Naive thymus-derived CD4-positive, alpha-beta T cell (primary cell): ENCODE measurements at regions of chr6 and their contacts with region 1.

Region 1: GRCh38 chr6:16731478-16732051 is 29.7 kb downstream of the ATXN1 start:
- DNase-seq: peak in 1 of 9 donors; percentile 42
- ATAC-seq: peak; percentile 54
- H3K4me3 ChIP-seq: no peak overlapping the region
- H3K4me3 Mint-ChIP-seq: peak overlapping the region in 8 of 10 donors; percentile 3 to 78 (median 45)
- H3K27ac ChIP-seq: no peak overlapping the region
- H3K27ac Mint-ChIP-seq: peak overlapping the region in 4 of 9 donors; percentile 51 to 77 (median 74)
- H3K4me1 ChIP-seq: peaks cover 12 to 41% of the 10 kb centered on the region in 2 donors
- H3K4me1 Mint-ChIP-seq: peaks cover 14 to 65% (median 22%) of the 10 kb centered on the region in 7 donors
- H3K27me3 ChIP-seq: no peaks in the 10 kb centered on the region
- H3K27me3 Mint-ChIP-seq: no peaks in the 10 kb centered on the region

Region 2: DNA sequence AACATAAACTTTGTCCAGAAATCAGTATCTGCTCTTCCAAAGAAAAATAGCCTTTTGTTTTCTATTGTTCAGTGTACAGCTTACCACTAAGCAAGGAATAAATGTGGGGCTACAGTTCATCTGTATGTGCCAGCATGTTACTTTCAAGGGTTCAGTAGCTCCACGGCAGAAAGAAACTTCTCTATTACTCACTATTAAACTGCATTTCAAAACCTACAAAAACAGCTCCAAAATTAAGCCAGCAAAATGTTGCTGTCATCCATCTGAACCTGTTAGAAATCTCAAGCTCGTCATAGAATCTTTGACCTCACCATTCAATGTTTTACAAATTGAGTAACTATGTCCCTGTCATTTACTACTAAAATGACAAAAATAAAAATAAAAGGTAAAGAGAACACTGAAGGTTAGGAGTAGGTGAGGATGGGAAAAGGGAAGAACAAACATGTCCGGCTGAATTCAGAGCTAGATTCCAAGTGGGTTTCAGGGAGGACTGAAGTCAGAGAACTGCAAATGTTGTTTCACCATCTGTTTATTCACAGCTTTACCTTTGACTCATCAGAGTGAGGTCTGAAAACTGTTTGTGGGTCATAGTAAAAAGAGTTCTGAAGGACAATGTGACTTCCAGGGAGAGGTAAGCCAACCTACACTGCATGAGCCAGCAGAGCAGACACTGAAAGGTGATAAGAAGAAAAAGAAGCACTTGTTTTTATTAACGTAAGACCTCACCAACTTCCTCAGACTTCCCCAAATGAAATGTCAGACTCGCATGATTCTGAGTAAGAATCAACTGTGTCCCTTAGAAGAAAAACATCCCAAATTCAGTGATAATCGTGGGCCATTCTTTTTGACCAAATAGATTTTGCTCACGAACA is 32.3 kb before region 1 on chr6:
- CTCF ChIA-PET with region 1: no interaction called
- POLR2A ChIA-PET with region 1: no interaction called
- intact Hi-C with region 1: loop called in 1 of 2 experiments (anchors 5 kb)
- DNase-seq: no peak
- ATAC-seq: peak; percentile 62
- H3K4me3 ChIP-seq: peak overlapping the region; percentile 44
- H3K4me3 Mint-ChIP-seq: peak overlapping the region in 5 of 10 donors; percentile 9 to 87 (median 78)
- H3K27ac ChIP-seq: no peak overlapping the region
- H3K27ac Mint-ChIP-seq: peak overlapping the region in 3 of 9 donors; percentile 64 to 89 (median 65)
- H3K4me1 ChIP-seq: peaks cover 0 to 57% of the 10 kb centered on the region in 2 donors
- H3K4me1 Mint-ChIP-seq: peaks cover 30 to 68% (median 35%) of the 10 kb centered on the region in 7 donors
- H3K27me3 ChIP-seq: no peaks in the 10 kb centered on the region
- H3K27me3 Mint-ChIP-seq: no peaks in the 10 kb centered on the region

Region 3: GRCh38 chr6:16712931-16713484 is 18.6 kb before region 1 on chr6:
- CTCF ChIA-PET with region 1: no interaction called
- POLR2A ChIA-PET with region 1: no interaction called
- intact Hi-C with region 1: loop called in 1 of 2 experiments (anchors 1 kb)
- DNase-seq: no peak
- ATAC-seq: peak; percentile 70
- H3K4me3 ChIP-seq: peak overlapping the region; percentile 3
- H3K4me3 Mint-ChIP-seq: peak overlapping the region in 7 of 10 donors; percentile 12 to 79 (median 56)
- H3K27ac ChIP-seq: no peak overlapping the region
- H3K27ac Mint-ChIP-seq: peak overlapping the region in 5 of 9 donors; percentile 52 to 85 (median 67)
- H3K4me1 ChIP-seq: peaks cover 0 to 18% of the 10 kb centered on the region in 2 donors
- H3K4me1 Mint-ChIP-seq: peaks cover 11 to 54% (median 22%) of the 10 kb centered on the region in 7 donors
- H3K27me3 ChIP-seq: no peaks in the 10 kb centered on the region
- H3K27me3 Mint-ChIP-seq: no peaks in the 10 kb centered on the region

Region 4: DNA sequence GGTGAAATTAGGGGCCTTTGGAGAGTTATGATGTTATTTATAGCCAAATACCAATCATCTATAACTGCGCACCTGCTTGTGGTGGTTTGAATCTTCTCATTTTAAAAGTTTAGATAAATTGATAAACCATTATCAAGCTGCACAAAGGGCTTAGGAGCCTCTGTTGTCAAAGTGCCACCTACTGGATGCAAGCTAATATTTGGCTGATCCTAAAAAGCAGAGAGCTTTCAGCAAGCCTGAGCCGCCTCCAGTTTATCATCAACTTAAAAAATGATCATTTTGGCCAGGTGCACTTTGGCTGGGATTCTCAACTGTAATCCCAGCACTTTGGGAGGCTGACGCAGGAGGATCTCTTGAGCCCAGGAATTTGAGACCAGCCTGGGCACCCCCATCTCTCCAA is 88.2 kb after region 1 on chr6:
- CTCF ChIA-PET with region 1: no interaction called
- POLR2A ChIA-PET with region 1: no interaction called
- intact Hi-C with region 1: loop called in 1 of 2 experiments (anchors 1 kb)
- DNase-seq: no peak
- ATAC-seq: no peak
- H3K4me3 ChIP-seq: no peak overlapping the region
- H3K4me3 Mint-ChIP-seq: no peak overlapping the region
- H3K27ac ChIP-seq: no peak overlapping the region
- H3K27ac Mint-ChIP-seq: no peak overlapping the region
- H3K4me1 ChIP-seq: no peaks in the 10 kb centered on the region
- H3K4me1 Mint-ChIP-seq: no peaks in the 10 kb centered on the region
- H3K27me3 ChIP-seq: peaks cover 0 to 3% of the 10 kb centered on the region in 2 donors
- H3K27me3 Mint-ChIP-seq: peaks cover 5 to 33% (median 9%) of the 10 kb centered on the region in 5 donors